ENCODE measurements at regions of chr4 and their contacts with region 1.

Region 1: GRCh38 chr4:114180481-114180880 is 201.0 kb upstream of the ARSJ start:
- DNase-seq: peak in 6 of 9 donors; percentile 1 to 27 (median 16)
- ATAC-seq: peak; percentile 29
- H3K4me3 ChIP-seq: no peak overlapping the region
- H3K4me3 Mint-ChIP-seq: no peak overlapping the region
- H3K27ac ChIP-seq: no peak overlapping the region
- H3K27ac Mint-ChIP-seq: no peak overlapping the region
- H3K4me1 ChIP-seq: no peaks in the 10 kb centered on the region
- H3K4me1 Mint-ChIP-seq: no peaks in the 10 kb centered on the region
- H3K27me3 ChIP-seq: no peaks in the 10 kb centered on the region
- H3K27me3 Mint-ChIP-seq: peaks cover 0 to 8% (median 0%) of the 10 kb centered on the region in 5 donors

Region 2: GRCh38 chr4:113952452-113953029 is 227.9 kb before region 1 on chr4:
- CTCF ChIA-PET with region 1: interaction called, 3 read pairs
- POLR2A ChIA-PET with region 1: no interaction called
- intact Hi-C with region 1: loop called in 1 of 2 experiments (anchors 1 kb)
- DNase-seq: peak in 5 of 9 donors; percentile 8 to 33 (median 21)
- ATAC-seq: peak; percentile 81
- H3K4me3 ChIP-seq: no peak overlapping the region
- H3K4me3 Mint-ChIP-seq: peak overlapping the region in 1 of 10 donors; percentile 13
- H3K27ac ChIP-seq: no peak overlapping the region
- H3K27ac Mint-ChIP-seq: no peak overlapping the region
- H3K4me1 ChIP-seq: no peaks in the 10 kb centered on the region
- H3K4me1 Mint-ChIP-seq: peaks cover 0 to 30% (median 20%) of the 10 kb centered on the region in 7 donors
- H3K27me3 ChIP-seq: no peaks in the 10 kb centered on the region
- H3K27me3 Mint-ChIP-seq: peaks cover 0 to 19% (median 5%) of the 10 kb centered on the region in 5 donors

Region 3: DNA sequence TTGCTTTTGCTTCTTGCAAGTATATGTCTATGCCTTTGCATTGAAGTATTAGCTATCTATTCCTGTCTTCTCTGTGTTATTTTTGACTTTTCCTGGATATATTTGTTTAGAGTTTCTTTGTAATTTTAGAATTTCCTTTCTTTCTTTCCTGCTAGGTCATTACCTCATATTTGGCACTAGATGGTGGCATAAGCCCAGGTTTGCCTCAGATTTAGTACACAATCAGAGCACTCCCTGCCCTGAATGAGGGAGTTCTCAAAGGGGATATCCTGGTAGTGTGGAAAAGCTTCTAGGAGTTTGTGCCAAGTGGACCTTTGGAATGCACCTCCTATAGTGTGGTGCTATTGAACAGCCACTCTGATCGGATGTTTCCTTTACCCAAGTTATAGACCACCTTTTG is 599.7 kb after region 1 on chr4:
- CTCF ChIA-PET with region 1: no interaction called
- POLR2A ChIA-PET with region 1: no interaction called
- intact Hi-C with region 1: no loop called
- DNase-seq: no peak
- ATAC-seq: no peak
- H3K4me3 ChIP-seq: no peak overlapping the region
- H3K4me3 Mint-ChIP-seq: no peak overlapping the region
- H3K27ac ChIP-seq: no peak overlapping the region
- H3K27ac Mint-ChIP-seq: no peak overlapping the region
- H3K4me1 ChIP-seq: no peaks in the 10 kb centered on the region
- H3K4me1 Mint-ChIP-seq: no peaks in the 10 kb centered on the region
- H3K27me3 ChIP-seq: no peaks in the 10 kb centered on the region
- H3K27me3 Mint-ChIP-seq: peaks cover 0 to 17% (median 6%) of the 10 kb centered on the region in 5 donors

Measured in naive thymus-derived CD4-positive, alpha-beta T cell (primary cell).